Activated T-helper 2 cell treated with anti-CD3 and anti-CD28 coated beads, Interferon-gamma antibody, Interleukin-2, Interleukin-4, amounts not matched to agents 10 μg/mL and 5 μg/mL and 100 μg/mL, durations not matched to agents 14 hours and 24 hours and 36 hours (primary cell): ENCODE measurements at regions of chr14 and their contacts with region 1.

Region 1: DNA sequence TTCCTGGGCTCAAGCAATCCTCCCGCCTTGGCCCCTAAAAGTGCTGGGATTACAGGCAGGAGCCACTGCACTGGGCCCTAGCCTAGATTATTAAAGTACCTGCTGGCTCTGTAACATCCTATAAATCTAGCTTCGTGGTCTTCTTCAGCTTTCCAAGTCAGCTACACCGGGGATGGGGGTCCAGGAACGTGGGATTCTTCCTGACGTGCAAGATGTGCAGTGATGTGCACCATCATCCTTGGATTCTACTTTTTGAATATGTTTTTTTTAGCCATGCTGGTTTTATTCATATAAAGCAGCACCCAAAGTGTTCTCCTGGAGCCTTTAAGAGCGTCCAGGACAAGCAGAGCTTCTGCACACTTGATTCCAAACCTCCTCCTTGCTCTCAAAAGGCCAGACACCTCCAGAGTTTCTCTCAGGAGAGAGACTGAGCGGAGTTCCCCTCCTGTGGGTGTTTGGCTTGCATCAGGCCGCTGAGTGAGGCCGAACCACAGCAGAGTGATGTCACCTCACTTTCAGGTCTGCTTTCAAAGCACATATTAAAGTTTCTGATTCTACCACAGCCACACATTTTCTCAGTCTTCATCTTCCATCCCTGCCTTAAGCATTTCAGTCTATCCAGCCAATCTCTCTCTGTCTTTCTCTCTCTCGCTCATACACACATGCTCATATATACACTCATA is 33.4 kb downstream of the VCPKMT start:
- DNase-seq: peak; percentile 81
- H3K4me3 Mint-ChIP-seq: peak overlapping the region; percentile 49
- H3K27ac Mint-ChIP-seq: peak overlapping the region; percentile 91
- H3K4me1 Mint-ChIP-seq: peaks cover 62% of the 10 kb centered on the region
- H3K27me3 Mint-ChIP-seq: no peaks in the 10 kb centered on the region

Region 2: DNA sequence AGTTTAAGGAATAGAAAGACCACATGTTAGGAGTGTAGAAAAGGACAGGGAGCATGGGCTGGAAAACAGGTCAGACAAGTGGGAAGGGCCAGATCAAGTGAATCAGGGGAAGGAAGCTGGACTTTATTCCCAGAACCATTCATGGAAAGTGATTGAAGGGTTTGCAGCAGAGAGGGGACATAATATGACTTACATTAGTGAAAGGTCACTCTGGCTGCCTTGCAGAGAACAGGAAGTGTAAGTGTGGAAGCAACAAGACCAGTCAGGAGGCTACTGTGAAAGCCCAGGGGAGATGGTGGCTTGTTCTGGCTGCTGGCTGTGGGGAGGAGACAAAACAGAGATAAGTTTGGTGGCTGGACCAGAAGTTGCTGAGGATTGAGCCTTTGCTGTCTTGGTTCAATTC is 35.6 kb before region 1 on chr14:
- intact Hi-C with region 1: no loop called
- DNase-seq: no peak
- H3K4me3 Mint-ChIP-seq: no peak overlapping the region
- H3K27ac Mint-ChIP-seq: peak overlapping the region; percentile 0
- H3K4me1 Mint-ChIP-seq: peaks cover 37% of the 10 kb centered on the region
- H3K27me3 Mint-ChIP-seq: no peaks in the 10 kb centered on the region

Region 3: GRCh38 chr14:50095895-50096294 is 13.0 kb after region 1 on chr14:
- intact Hi-C with region 1: loop called (anchors 1 kb)
- DNase-seq: no peak
- H3K4me3 Mint-ChIP-seq: peak overlapping the region; percentile 45
- H3K27ac Mint-ChIP-seq: peak overlapping the region; percentile 81
- H3K4me1 Mint-ChIP-seq: peaks cover 56% of the 10 kb centered on the region
- H3K27me3 Mint-ChIP-seq: peaks cover 4% of the 10 kb centered on the region